Transverse colon (tissue), 4 donors: ENCODE measurements at regions of chr6 and their contacts with region 1.

Region 1: GRCh38 chr6:166106076-166106686 is 61.5 kb downstream of the TBXT start:
- DNase-seq: peak; percentile 73
- H3K4me3 ChIP-seq: no peak overlapping the region
- H3K27ac ChIP-seq: no peak overlapping the region
- H3K4me1 ChIP-seq: no peaks in the 10 kb centered on the region
- H3K27me3 ChIP-seq: peaks cover 9% of the 10 kb centered on the region
- CTCF ChIP-seq: peak; percentile 70 to 89 (median 79)
- EP300 ChIP-seq: no peak
- POLR2A ChIP-seq: no peak

Region 2: DNA sequence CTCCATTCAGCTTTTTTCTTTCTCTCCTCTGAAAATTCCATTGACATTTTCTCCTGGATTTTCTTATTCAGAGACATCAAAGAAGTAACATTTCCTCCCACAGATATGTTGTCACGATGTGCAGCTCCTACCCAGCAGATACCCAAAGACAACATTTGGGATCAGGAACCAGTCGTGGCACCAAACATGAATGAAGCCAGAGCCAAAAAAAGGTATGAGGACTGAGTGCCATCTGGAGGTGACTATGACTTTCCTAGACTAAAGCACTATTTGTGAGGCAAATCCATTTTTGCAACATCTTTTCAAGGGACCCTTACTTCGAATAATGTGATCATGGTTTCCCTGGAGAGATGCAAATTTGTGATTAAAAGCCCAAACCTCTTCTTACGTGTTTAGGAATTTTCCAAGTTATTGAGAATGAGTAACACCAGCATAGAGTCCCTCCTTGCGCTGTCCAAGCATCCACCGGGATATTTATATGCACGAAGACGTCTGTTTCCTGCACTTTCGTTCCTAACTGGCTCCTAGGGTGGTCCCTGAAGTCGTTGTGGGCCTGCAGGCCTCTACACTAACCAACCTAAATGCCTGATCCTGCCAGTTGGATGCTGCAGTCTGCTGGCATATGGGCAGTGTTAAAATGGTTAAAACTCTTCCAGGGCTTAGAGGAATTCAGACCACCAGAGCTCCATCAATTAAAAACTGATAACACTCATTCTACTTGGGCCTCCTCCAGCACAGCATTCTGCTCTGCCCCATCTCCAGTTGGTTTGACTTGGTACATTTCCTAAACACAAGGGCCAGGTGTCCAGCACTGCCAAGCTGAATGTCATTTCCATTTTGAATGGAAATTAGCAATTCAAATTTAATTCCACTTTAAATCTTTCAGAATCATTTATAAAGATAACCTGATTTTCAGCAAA is 1053.4 kb before region 1 on chr6:
- in situ Hi-C with region 1: no loop called
- intact Hi-C with region 1: loop called (anchors 5 kb)
- DNase-seq: no peak
- H3K4me3 ChIP-seq: no peak overlapping the region
- H3K27ac ChIP-seq: no peak overlapping the region
- H3K4me1 ChIP-seq: no peaks in the 10 kb centered on the region
- H3K27me3 ChIP-seq: no peaks in the 10 kb centered on the region
- CTCF ChIP-seq: no peak
- EP300 ChIP-seq: no peak
- POLR2A ChIP-seq: no peak

Region 3: GRCh38 chr6:165439928-165440554 is 666.1 kb before region 1 on chr6:
- in situ Hi-C with region 1: loop called in 1 of 4 experiments (anchors 25 kb)
- intact Hi-C with region 1: no loop called
- DNase-seq: no peak
- H3K4me3 ChIP-seq: no peak overlapping the region
- H3K27ac ChIP-seq: no peak overlapping the region
- H3K4me1 ChIP-seq: no peaks in the 10 kb centered on the region
- H3K27me3 ChIP-seq: no peaks in the 10 kb centered on the region
- CTCF ChIP-seq: peak in 3 of 5 experiments; percentile 14 to 36 (median 36)
- EP300 ChIP-seq: no peak
- POLR2A ChIP-seq: no peak

Region 4: GRCh38 chr6:165884813-165885765 is 221.1 kb before region 1 on chr6:
- in situ Hi-C with region 1: loop called in 1 of 4 experiments (anchors 5 kb)
- intact Hi-C with region 1: no loop called
- DNase-seq: peak; percentile 78
- H3K4me3 ChIP-seq: no peak overlapping the region
- H3K27ac ChIP-seq: peak overlapping the region in 1 of 4 donors; percentile 25
- H3K4me1 ChIP-seq: peaks cover 0 to 3% (median 0%) of the 10 kb centered on the region in 4 donors
- H3K27me3 ChIP-seq: no peaks in the 10 kb centered on the region
- CTCF ChIP-seq: peak; percentile 80 to 91 (median 84)
- EP300 ChIP-seq: no peak
- POLR2A ChIP-seq: no peak

Region 5: GRCh38 chr6:166078294-166078693 is 27.9 kb before region 1 on chr6:
- in situ Hi-C with region 1: no loop called
- intact Hi-C with region 1: no loop called
- DNase-seq: no peak
- H3K4me3 ChIP-seq: no peak overlapping the region
- H3K27ac ChIP-seq: no peak overlapping the region
- H3K4me1 ChIP-seq: no peaks in the 10 kb centered on the region
- H3K27me3 ChIP-seq: no peaks in the 10 kb centered on the region
- CTCF ChIP-seq: no peak
- EP300 ChIP-seq: no peak
- POLR2A ChIP-seq: no peak